Activated CD8-positive, alpha-beta memory T cell treated with anti-CD3 and anti-CD28 coated beads, Interleukin-2, amount 10 ng/mL, durations not matched to agents 7 days and 5 days (primary cell): ENCODE measurements at regions of chr7 and their contacts with region 1.

Region 1: GRCh38 chr7:148962823-148963582 is 65.3 kb downstream of the PDIA4 start:
- DNase-seq: peak; percentile 75
- ATAC-seq: peak; percentile 63
- H3K4me3 Mint-ChIP-seq: peak overlapping the region; percentile 83
- H3K27ac Mint-ChIP-seq: peak overlapping the region; percentile 81
- H3K4me1 Mint-ChIP-seq: peaks cover 28% of the 10 kb centered on the region
- H3K27me3 Mint-ChIP-seq: peaks cover 5% of the 10 kb centered on the region

Region 2: GRCh38 chr7:148503875-148504487 is 459.0 kb before region 1 on chr7:
- CTCF ChIA-PET with region 1: interaction called, 15 read pairs
- DNase-seq: no peak
- ATAC-seq: no peak
- H3K4me3 Mint-ChIP-seq: no peak overlapping the region
- H3K27ac Mint-ChIP-seq: no peak overlapping the region
- H3K4me1 Mint-ChIP-seq: peaks cover 22% of the 10 kb centered on the region
- H3K27me3 Mint-ChIP-seq: peaks cover 43% of the 10 kb centered on the region

Region 3: DNA sequence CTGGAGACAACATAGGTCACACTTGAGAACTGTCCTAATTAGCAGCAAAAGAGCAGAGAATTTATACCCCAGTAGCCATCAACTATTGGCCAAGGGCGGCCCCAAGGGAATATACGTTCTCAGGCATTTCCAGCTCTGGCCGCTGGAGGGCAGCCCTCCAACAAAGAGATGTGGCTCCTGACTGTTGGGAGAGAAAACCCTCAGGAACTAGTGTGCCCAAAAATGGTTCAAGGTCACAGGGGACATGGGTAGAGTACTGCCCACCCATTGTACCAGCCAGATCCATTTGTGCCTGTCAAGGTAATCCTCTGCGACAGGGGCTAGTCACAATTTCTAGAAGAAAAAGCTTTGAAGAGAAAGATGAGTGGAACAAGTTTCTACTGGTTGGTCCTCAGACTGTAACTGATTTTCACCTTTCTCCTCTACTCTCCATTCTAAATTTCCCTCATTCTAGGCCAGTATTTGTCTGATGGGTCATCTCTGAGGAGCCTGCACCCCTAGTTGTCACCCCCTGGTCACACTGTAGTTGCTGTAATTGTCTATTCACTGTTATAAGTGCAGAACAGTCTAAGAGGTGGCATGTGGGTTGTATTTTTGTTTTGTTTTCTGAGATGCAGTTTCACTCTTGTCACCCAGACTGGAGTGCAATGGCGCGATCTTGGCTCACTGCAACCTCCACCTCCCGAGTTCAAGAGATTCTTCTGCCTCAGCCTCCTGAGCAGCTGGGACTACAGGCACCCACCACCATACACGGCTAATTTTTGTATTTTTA is 387.2 kb before region 1 on chr7:
- CTCF ChIA-PET with region 1: interaction called, 45 read pairs
- DNase-seq: peak; percentile 79
- ATAC-seq: peak; percentile 94
- H3K4me3 Mint-ChIP-seq: no peak overlapping the region
- H3K27ac Mint-ChIP-seq: peak overlapping the region; percentile 22
- H3K4me1 Mint-ChIP-seq: peaks cover 8% of the 10 kb centered on the region
- H3K27me3 Mint-ChIP-seq: peaks cover 29% of the 10 kb centered on the region

Region 4: DNA sequence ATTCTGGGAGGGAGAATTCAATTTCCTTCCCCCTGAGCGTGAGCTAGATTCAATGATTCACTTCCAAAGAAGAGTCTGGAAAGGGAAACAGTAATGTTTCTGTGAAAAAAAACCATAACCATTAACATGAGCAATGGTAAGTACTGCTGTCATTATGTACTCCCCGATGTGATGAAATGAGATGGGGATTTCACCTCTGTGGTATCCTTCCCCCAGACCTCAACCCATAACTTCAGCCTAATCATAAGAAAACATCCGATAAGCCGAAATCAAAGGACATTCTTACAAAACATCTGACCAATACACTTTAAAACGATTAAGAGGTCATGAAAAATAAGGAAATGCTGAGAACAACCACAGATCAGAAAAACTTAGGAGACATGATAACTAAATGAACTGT is 106.1 kb before region 1 on chr7:
- CTCF ChIA-PET with region 1: interaction called, 15 read pairs
- DNase-seq: peak; percentile 50
- ATAC-seq: peak; percentile 50
- H3K4me3 Mint-ChIP-seq: peak overlapping the region; percentile 18
- H3K27ac Mint-ChIP-seq: peak overlapping the region; percentile 53
- H3K4me1 Mint-ChIP-seq: peaks cover 43% of the 10 kb centered on the region
- H3K27me3 Mint-ChIP-seq: no peaks in the 10 kb centered on the region

Region 5: GRCh38 chr7:148940702-148941597 is 22.1 kb before region 1 on chr7:
- CTCF ChIA-PET with region 1: interaction called, 23 read pairs
- DNase-seq: peak; percentile 79
- ATAC-seq: peak; percentile 85
- H3K4me3 Mint-ChIP-seq: peak overlapping the region; percentile 79
- H3K27ac Mint-ChIP-seq: peak overlapping the region; percentile 97
- H3K4me1 Mint-ChIP-seq: peaks cover 20% of the 10 kb centered on the region
- H3K27me3 Mint-ChIP-seq: no peaks in the 10 kb centered on the region

Region 6: GRCh38 chr7:148975896-148976295 is 12.9 kb after region 1 on chr7:
- CTCF ChIA-PET with region 1: interaction called, 14 read pairs
- DNase-seq: no peak
- ATAC-seq: peak; percentile 12
- H3K4me3 Mint-ChIP-seq: no peak overlapping the region
- H3K27ac Mint-ChIP-seq: no peak overlapping the region
- H3K4me1 Mint-ChIP-seq: peaks cover 6% of the 10 kb centered on the region
- H3K27me3 Mint-ChIP-seq: peaks cover 6% of the 10 kb centered on the region

Region 7: GRCh38 chr7:148987010-148987750 is 24.2 kb after region 1 on chr7:
- CTCF ChIA-PET with region 1: interaction called, 11 read pairs
- DNase-seq: peak; percentile 91
- ATAC-seq: peak; percentile 89
- H3K4me3 Mint-ChIP-seq: peak overlapping the region; percentile 92
- H3K27ac Mint-ChIP-seq: peak overlapping the region; percentile 83
- H3K4me1 Mint-ChIP-seq: peaks cover 44% of the 10 kb centered on the region
- H3K27me3 Mint-ChIP-seq: peaks cover 21% of the 10 kb centered on the region